ENCODE measurements at regions of chr22 and their contacts with region 1.

Region 1: GRCh38 chr22:41746567-41747400 is 47.5 kb downstream of the MEI1 start:
- DNase-seq: peak; percentile 83
- H3K4me3 Mint-ChIP-seq: no peak overlapping the region
- H3K27ac Mint-ChIP-seq: no peak overlapping the region
- H3K4me1 Mint-ChIP-seq: peaks cover 6% of the 10 kb centered on the region
- H3K27me3 Mint-ChIP-seq: no peaks in the 10 kb centered on the region

Region 2: GRCh38 chr22:41780746-41781505 is 34.1 kb after region 1 on chr22:
- CTCF ChIA-PET with region 1: interaction called, 34 read pairs
- intact Hi-C with region 1: loop called (anchors 2 kb)
- DNase-seq: peak; percentile 98
- H3K4me3 Mint-ChIP-seq: peak overlapping the region; percentile 86
- H3K27ac Mint-ChIP-seq: peak overlapping the region; percentile 95
- H3K4me1 Mint-ChIP-seq: peaks cover 49% of the 10 kb centered on the region
- H3K27me3 Mint-ChIP-seq: no peaks in the 10 kb centered on the region

Region 3: GRCh38 chr22:41800348-41801146 is 53.8 kb after region 1 on chr22 and contains the start of gene CCDC134:
- CTCF ChIA-PET with region 1: interaction called, 36 read pairs
- intact Hi-C with region 1: loop called (anchors 1 kb)
- DNase-seq: peak; percentile 93
- H3K4me3 Mint-ChIP-seq: peak within 1 kb of the TSS; percentile 84
- H3K27ac Mint-ChIP-seq: peak within 1 kb of the TSS; percentile 95
- H3K4me1 Mint-ChIP-seq: peaks cover 38% of the 10 kb centered on the region
- H3K27me3 Mint-ChIP-seq: no peaks in the 10 kb centered on the region
- total RNA-seq, gene CCDC134: 17.0 to 19.3 TPM

Region 4: GRCh38 chr22:41822317-41823060 is 75.7 kb after region 1 on chr22:
- CTCF ChIA-PET with region 1: no interaction called
- intact Hi-C with region 1: loop called (anchors 1 kb)
- DNase-seq: peak; percentile 65
- H3K4me3 Mint-ChIP-seq: no peak overlapping the region
- H3K27ac Mint-ChIP-seq: peak overlapping the region; percentile 81
- H3K4me1 Mint-ChIP-seq: peaks cover 33% of the 10 kb centered on the region
- H3K27me3 Mint-ChIP-seq: no peaks in the 10 kb centered on the region

Region 5: DNA sequence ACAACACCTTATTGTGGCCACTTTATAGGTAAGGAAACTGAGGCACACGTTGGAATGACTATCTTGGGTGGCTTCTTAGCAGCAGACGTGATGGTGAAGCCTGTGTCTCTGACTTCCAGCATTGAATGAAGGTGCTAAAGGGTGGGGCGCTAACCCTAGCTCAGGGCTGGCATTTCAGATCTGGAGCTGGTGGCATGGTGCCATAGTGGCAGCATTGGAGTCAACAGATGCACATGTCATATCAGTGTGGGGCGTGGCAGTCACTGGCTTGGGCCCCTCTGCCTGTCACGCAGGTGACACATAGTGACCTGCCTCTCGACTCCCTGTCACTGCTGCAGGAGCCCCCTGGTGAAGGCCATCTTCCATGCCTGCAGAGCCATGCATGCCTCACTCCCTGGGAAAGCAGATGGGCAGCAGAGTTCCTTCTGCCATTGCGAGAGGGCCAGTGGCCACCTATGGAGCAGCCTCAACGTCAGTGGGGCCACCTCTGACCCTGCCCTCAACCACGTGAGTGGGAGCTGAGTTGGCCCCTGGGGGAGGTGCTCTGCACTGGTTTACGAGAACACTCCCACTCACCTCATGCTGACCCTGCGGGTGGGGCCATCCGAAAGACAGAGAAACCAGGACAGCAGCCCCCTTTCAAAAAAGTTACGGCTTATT is 153.3 kb after region 1 on chr22:
- CTCF ChIA-PET with region 1: no interaction called
- intact Hi-C with region 1: no loop called
- DNase-seq: no peak
- H3K4me3 Mint-ChIP-seq: no peak overlapping the region
- H3K27ac Mint-ChIP-seq: no peak overlapping the region
- H3K4me1 Mint-ChIP-seq: no peaks in the 10 kb centered on the region
- H3K27me3 Mint-ChIP-seq: no peaks in the 10 kb centered on the region

Measured in activated naive CD4-positive, alpha-beta T cell treated with anti-CD3 and anti-CD28 coated beads for 36 hours (primary cell).